ENCODE measurements at regions of chr20 and their contacts with region 1.

Region 1: GRCh38 chr20:38926142-38926933 is at the start of gene FAM83D:
- DNase-seq: peak; percentile 98
- H3K4me3 Mint-ChIP-seq: peak within 1 kb of the TSS; percentile 81
- H3K27ac Mint-ChIP-seq: peak within 1 kb of the TSS; percentile 14
- H3K4me1 Mint-ChIP-seq: peaks cover 26% of the 10 kb centered on the region
- H3K27me3 Mint-ChIP-seq: no peaks in the 10 kb centered on the region
- total RNA-seq, gene FAM83D: 11.1 to 11.2 TPM

Region 2: DNA sequence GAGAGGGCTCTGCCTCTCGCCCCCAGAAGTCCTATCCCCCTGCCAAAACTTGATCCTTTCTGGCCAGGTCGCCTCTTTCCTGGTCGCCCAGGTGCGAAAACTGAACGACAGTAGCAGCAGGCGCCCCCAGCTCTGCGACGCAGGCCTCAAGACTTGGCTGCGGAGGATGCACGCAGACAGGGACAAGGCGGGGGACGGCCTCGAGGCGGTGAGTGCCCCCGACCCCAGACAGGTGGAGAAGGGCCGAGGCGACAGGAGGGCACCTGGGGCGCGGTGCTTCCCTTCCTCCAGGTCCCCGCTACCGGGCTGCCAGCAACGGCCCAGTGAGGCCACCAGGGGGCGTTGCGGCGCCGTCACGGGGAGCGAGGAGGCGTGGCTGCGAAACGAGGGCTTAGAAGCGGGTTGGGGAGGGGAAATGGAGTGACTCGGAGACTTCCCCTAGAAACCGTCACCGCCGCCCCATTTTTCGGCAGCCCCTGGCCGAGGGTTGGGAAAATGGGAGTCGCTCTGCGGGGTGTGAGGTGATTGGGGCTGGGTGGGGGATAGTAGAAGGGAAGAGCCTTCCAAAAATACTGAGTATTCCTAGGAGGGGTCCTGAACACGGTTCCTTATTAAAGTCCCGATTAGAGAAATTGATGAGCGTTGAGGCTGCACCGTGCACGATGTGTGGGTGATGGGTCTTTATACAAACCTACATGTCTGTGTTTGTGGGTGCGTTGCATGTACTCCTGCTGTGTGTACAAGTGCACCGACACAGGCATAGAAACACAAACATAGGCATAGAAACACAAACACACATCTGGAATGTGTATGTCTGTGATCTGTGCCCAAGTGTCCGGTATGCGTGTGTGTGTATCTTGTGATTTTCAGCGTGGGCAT is 280.1 kb before region 1 on chr20:
- CTCF ChIA-PET with region 1: interaction called, 5 read pairs
- POLR2A ChIA-PET with region 1: no interaction called
- intact Hi-C with region 1: loop called (anchors 5 kb)
- DNase-seq: peak; percentile 93
- H3K4me3 Mint-ChIP-seq: peak overlapping the region; percentile 43
- H3K27ac Mint-ChIP-seq: no peak overlapping the region
- H3K4me1 Mint-ChIP-seq: peaks cover 7% of the 10 kb centered on the region
- H3K27me3 Mint-ChIP-seq: peaks cover 23% of the 10 kb centered on the region

Region 3: DNA sequence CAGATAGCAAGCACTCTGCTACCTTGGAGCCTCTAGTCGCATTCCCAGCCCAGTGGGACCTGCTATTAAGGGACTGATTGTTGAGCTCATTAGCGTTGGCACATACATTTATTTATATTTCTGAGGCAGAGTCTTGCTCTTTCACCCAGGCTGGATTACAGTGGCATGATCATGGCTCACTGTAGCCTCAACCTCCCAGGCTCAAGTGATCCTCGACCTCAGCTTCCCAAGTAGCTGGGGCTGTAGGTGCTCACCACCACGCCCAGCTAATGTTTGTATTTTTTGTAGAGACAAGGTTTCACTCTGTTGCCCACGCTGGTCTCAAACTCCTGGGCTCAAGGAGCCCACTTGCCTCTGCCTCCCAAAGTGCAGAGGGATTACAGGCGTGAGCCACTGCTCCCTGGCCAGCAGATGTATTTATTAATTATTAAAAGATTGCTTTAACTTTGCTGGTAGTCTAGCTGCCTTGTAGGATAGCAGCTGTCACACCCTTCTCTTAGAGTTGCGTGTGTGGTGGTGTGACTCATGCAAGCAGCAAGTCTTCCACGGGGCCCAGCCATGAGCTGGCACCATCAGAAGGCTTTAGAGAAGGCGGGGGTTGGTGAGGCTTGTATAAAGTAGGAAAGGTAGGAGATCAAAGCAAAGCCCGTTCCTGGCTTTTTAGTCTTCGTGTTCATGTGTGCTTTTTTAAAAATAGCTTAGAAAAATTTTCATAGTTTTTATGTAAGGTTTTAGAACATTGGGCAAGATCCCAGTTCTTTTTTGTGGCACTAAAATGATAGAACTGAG is 161.6 kb before region 1 on chr20:
- CTCF ChIA-PET with region 1: no interaction called
- POLR2A ChIA-PET with region 1: no interaction called
- intact Hi-C with region 1: no loop called
- DNase-seq: peak; percentile 79
- H3K4me3 Mint-ChIP-seq: no peak overlapping the region
- H3K27ac Mint-ChIP-seq: peak overlapping the region; percentile 71
- H3K4me1 Mint-ChIP-seq: peaks cover 26% of the 10 kb centered on the region
- H3K27me3 Mint-ChIP-seq: no peaks in the 10 kb centered on the region

Region 4: DNA sequence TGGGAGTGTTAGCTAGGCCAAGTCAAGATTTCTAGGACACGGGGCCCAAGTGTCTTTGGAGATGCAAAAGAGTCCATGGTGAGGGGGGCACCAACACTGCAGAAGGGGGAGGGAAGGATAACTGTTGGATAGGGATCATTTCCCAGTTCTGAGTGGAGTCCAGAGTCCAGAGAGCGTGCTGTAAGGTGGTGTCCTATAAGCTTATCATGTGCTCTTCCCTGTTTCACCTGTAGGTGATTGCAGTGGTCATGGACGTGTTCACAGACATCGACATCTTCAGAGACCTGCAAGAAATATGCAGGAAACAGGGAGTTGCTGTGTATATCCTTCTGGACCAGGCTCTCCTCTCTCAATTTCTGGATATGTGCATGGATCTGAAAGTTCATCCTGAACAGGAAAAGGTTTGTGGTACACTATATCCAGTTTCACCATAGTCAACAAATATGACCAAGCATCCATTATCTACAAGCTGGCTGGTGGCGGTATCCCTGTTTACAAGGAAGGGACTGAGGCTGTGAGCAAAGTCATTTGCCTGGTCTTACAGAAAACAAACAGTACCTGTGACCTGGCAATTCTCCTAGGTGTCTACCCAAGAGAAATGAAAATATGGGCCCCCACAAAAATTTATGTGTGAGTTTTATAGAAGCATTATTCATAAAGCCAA is 15.5 kb after region 1 on chr20:
- CTCF ChIA-PET with region 1: no interaction called
- POLR2A ChIA-PET with region 1: no interaction called
- intact Hi-C with region 1: no loop called
- DNase-seq: no peak
- H3K4me3 Mint-ChIP-seq: no peak overlapping the region
- H3K27ac Mint-ChIP-seq: no peak overlapping the region
- H3K4me1 Mint-ChIP-seq: no peaks in the 10 kb centered on the region
- H3K27me3 Mint-ChIP-seq: no peaks in the 10 kb centered on the region

Region 5: DNA sequence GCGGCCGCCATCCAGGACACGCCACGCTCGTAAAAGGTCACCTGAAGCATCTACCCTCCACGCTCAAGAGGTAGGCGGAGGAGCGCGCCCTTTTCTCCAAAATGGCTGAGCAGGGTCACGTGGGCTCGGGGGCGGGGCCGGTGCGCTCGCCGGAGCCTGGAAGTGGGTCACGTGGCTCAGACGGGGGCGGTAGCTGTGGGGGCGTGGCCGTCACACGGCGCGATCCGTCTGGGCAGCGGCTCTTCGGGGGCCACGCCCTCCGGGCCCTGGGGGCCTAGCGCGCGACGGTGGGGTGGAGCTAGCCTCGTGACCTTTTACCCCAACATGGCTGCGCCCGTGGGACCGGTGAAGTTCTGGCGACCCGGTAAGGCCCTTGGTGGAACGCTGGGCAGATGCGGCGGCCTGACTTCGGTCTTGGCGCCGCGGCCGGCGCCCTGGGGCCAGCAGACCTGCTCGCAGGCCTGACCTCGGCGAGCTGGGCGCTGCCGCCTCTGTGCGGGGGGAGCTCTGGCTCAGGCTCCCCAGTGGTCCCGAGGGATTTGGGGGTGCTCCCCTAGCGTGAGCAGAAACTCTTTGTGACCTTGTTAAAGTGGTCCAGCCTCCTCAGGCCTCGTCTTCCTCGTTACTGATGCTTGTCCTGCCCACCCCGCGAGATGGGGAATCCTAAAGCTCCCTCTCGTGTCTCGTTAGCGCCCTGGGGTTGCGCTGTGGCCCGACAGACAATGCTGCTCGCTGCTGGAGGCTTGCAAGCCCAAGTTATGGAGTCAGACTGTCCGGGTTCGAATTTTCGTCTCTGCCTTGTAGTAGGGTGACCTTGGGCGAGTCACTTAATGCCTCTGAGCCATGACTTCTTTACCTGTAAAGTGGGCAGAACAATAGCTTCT is 35.9 kb after region 1 on chr20 and contains the start of gene DHX35:
- CTCF ChIA-PET with region 1: interaction called, 30 read pairs
- POLR2A ChIA-PET with region 1: interaction called, 25 read pairs
- intact Hi-C with region 1: loop called (anchors 1 kb)
- DNase-seq: peak; percentile 99
- H3K4me3 Mint-ChIP-seq: peak within 1 kb of the TSS; percentile 93
- H3K27ac Mint-ChIP-seq: peak within 1 kb of the TSS; percentile 91
- H3K4me1 Mint-ChIP-seq: peaks cover 24% of the 10 kb centered on the region
- H3K27me3 Mint-ChIP-seq: no peaks in the 10 kb centered on the region
- total RNA-seq, gene DHX35: 7.7 to 8.3 TPM

Region 6: GRCh38 chr20:39025883-39026282 is 99.5 kb after region 1 on chr20:
- CTCF ChIA-PET with region 1: interaction called, 3 read pairs
- POLR2A ChIA-PET with region 1: interaction called, 3 read pairs
- intact Hi-C with region 1: loop called (anchors 1 kb)
- DNase-seq: peak; percentile 58
- H3K4me3 Mint-ChIP-seq: no peak overlapping the region
- H3K27ac Mint-ChIP-seq: no peak overlapping the region
- H3K4me1 Mint-ChIP-seq: peaks cover 33% of the 10 kb centered on the region
- H3K27me3 Mint-ChIP-seq: no peaks in the 10 kb centered on the region

Region 7: GRCh38 chr20:39081255-39081654 is 154.9 kb after region 1 on chr20:
- CTCF ChIA-PET with region 1: interaction called, 12 read pairs
- POLR2A ChIA-PET with region 1: no interaction called
- intact Hi-C with region 1: loop called (anchors 1 kb)
- DNase-seq: peak; percentile 86
- H3K4me3 Mint-ChIP-seq: no peak overlapping the region
- H3K27ac Mint-ChIP-seq: no peak overlapping the region
- H3K4me1 Mint-ChIP-seq: no peaks in the 10 kb centered on the region
- H3K27me3 Mint-ChIP-seq: peaks cover 26% of the 10 kb centered on the region